ENCODE measurements at regions of chr3 and their contacts with region 1.

Region 1: GRCh38 chr3:141561426-141562034 is 74.7 kb downstream of the RASA2 start:
- DNase-seq: peak; percentile 64
- H3K4me3 ChIP-seq: no peak overlapping the region
- H3K27ac ChIP-seq: no peak overlapping the region
- H3K4me1 ChIP-seq: no peaks in the 10 kb centered on the region
- CTCF ChIP-seq: peak; percentile 99

Region 2: GRCh38 chr3:141303481-141304223 is 257.9 kb before region 1 on chr3:
- CTCF ChIA-PET with region 1: no interaction called
- POLR2A ChIA-PET with region 1: interaction called, 5 read pairs
- intact Hi-C with region 1: loop called (anchors 5 kb)
- DNase-seq: peak; percentile 81
- H3K4me3 ChIP-seq: no peak overlapping the region
- H3K27ac ChIP-seq: no peak overlapping the region
- H3K4me1 ChIP-seq: no peaks in the 10 kb centered on the region
- CTCF ChIP-seq: peak; percentile 92

Region 3: DNA sequence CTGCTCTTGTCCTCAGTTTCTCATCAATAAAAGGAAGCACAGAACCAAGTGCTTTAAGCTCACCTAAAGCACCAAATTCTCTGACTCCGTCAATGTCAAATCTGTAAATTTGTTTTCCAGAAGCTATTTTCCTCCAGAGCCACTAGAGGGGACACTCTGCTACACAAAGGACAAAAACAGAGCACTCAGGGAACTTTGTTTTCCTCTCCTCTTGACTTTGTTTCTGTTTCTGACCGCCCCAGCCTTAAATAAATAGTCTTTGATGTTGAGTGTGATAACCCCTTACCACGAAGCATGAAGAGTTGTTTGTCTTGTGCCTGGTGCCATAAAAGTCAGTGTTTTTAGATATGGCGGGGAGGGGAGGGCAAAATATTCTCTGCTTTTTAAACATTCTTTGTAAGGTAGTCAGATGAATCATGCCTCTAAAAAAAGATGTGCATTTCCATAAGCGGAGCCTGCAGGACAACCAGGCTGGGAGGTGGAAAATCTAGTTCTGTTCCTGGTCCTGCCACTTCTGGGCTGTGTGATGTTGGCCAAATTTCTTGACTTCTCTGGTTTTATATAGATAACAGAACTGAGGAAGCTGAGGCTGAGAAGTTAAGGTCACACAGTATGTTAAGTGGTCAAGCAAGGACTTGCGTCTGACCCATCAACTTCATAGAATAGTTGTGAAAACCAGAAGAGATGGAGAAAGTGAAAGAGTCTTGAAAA is 200.5 kb before region 1 on chr3:
- CTCF ChIA-PET with region 1: no interaction called
- POLR2A ChIA-PET with region 1: no interaction called
- intact Hi-C with region 1: loop called (anchors 10 kb)
- DNase-seq: peak; percentile 71
- H3K4me3 ChIP-seq: peak overlapping the region; percentile 25
- H3K27ac ChIP-seq: no peak overlapping the region
- H3K4me1 ChIP-seq: peaks cover 5% of the 10 kb centered on the region
- CTCF ChIP-seq: peak; percentile 93

Region 4: DNA sequence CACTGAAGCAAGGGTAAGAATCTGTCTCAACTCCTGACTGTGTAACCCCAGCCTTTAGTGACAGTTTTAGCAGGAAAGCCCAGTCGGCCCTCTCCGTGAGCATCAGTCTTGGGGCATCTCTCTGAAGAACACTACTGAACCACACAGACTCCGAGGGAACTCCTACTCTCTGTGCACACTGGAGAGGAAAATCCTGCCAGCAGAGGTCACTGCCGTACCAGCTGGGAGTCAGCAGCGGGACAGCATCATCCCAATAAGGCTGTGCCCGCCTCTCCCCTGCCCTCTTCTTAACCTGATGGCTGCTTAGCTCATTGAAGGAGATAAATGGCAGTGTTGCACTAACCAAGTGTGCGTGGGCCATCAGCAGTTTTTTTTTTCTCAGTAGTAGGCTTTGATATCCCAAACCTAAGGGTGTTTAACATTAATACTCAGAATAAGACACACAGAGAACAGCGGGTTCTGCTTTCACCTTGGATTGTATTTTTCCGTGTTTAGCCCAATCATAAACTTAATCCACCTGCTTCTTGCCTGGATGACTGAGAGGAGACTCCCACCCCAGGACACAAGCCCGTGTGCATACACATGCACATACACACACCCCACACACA is 101.3 kb before region 1 on chr3:
- CTCF ChIA-PET with region 1: interaction called, 4 read pairs
- POLR2A ChIA-PET with region 1: interaction called, 3 read pairs
- intact Hi-C with region 1: loop called (anchors 1 kb)
- DNase-seq: peak; percentile 77
- H3K4me3 ChIP-seq: no peak overlapping the region
- H3K27ac ChIP-seq: no peak overlapping the region
- H3K4me1 ChIP-seq: no peaks in the 10 kb centered on the region
- CTCF ChIP-seq: peak; percentile 88

Region 5: GRCh38 chr3:141477224-141477623 is 84.3 kb before region 1 on chr3:
- CTCF ChIA-PET with region 1: no interaction called
- POLR2A ChIA-PET with region 1: no interaction called
- intact Hi-C with region 1: loop called (anchors 1 kb)
- DNase-seq: no peak
- H3K4me3 ChIP-seq: no peak overlapping the region
- H3K27ac ChIP-seq: no peak overlapping the region
- H3K4me1 ChIP-seq: no peaks in the 10 kb centered on the region
- CTCF ChIP-seq: no peak

Region 6: DNA sequence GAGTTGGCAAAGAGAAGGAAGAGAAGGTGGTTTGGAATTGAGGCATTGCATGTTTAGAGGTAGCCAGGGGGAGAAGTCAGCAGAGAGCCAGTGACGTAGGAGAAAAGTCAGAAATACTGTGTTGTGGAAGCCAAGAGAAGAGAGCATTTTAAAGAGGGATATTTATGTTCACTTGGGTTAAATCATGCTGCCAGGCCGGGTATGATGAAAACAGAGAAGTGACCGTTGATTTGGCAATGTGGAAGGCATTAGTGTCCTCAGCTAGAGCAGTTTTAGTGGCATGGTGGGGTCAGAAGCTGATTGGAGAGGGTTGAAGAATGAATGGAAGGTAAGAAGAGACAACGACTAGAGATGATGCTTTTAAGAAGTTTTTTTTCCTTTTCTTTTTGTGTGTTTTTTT is 50.2 kb before region 1 on chr3:
- CTCF ChIA-PET with region 1: no interaction called
- POLR2A ChIA-PET with region 1: interaction called, 8 read pairs
- intact Hi-C with region 1: loop called (anchors 2 kb)
- DNase-seq: no peak
- H3K4me3 ChIP-seq: no peak overlapping the region
- H3K27ac ChIP-seq: no peak overlapping the region
- H3K4me1 ChIP-seq: no peaks in the 10 kb centered on the region
- CTCF ChIP-seq: no peak

Measured in OCI-LY7 (cell line).